K562 (cell line): ENCODE measurements at regions of chr3 and their contacts with region 1.

Region 1: DNA sequence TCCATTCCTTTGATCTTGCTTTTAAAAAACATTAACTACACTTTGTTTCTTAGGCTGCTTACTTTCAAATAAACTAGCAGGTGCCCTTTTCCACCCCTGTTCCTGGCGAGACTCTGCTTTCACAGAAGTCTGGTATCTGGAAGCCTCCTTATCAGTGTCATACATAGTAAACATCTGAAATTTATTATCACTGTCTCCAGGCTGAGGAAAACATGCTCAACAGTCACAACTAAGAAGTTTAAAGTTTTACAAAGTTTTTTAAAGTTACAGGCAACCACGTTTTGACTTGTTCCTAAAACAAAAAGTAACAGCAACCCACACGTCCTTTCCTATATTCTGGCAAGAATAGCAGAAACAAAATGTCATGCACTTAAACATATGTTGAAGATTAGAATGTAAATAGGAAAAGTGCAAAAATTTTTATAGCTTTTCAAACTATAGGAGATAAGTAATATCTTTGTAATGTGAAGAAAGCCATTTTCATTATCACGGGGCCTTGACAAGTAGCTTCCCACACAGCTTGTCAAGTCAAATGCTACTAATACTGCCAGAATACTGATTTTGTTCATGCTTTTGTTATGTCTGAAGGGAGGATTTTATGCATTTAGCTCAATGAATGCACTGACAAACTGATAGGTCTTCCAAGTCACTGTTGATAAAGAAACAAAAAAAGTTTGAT is 275.2 kb upstream of the KCNMB2 start:
- DNase-seq: peak; percentile 24 to 83 (median 50)
- ATAC-seq: peak; percentile 88
- H3K4me3 ChIP-seq: no peak overlapping the region
- H3K27ac ChIP-seq: peak overlapping the region; percentile 70
- H3K4me1 ChIP-seq: peaks cover 0 to 34% of the 10 kb centered on the region in 2 experiments; a peak in 3 of 5 replicates
- H3K27me3 ChIP-seq: no peaks in the 10 kb centered on the region
- CTCF ChIP-seq: no peak
- EP300 ChIP-seq: peak; percentile 96
- POLR2A ChIP-seq: no peak
- RAD21 ChIP-seq: peak; percentile 11 to 29; a peak in 3 of 4 replicates

Region 2: DNA sequence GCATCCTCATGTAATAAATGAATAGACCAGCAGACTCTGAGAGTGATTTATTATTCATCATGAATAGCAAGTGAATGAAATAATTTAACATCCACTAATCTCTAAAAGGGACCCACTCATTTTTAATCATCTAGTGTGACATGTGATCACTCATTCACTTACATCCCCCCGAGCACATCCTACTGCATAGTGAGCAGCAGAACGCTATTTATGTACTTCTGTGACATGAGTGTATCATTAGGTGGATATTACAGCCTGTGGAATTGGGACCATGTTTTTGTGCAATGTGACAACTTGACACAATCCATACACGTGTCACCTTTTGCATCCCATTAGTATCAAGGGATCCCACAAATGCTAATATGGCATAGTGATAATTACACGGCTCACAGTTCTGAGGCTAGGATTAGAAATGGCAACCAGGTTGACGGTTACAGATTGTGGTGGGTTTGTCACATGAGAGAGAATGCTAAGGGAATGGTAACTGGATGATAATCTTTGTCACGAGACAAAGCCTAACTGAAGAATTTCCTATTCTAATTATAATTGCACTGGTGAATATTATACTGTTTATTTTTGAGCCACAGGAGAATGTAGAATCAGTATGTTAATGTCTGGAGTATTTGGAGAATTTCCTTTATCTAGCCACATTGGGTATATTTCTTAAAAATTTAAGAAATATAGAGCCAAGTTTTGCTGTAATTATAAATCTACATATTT is 468.6 kb before region 1 on chr3:
- CTCF ChIA-PET with region 1: no interaction called
- POLR2A ChIA-PET with region 1: no interaction called
- in situ Hi-C with region 1: no loop called
- intact Hi-C with region 1: no loop called
- DNase-seq: no peak
- ATAC-seq: no peak
- H3K4me3 ChIP-seq: no peak overlapping the region
- H3K27ac ChIP-seq: no peak overlapping the region
- H3K4me1 ChIP-seq: no peaks in the 10 kb centered on the region
- H3K27me3 ChIP-seq: no peaks in the 10 kb centered on the region
- CTCF ChIP-seq: no peak
- EP300 ChIP-seq: no peak
- POLR2A ChIP-seq: no peak
- RAD21 ChIP-seq: no peak

Region 3: DNA sequence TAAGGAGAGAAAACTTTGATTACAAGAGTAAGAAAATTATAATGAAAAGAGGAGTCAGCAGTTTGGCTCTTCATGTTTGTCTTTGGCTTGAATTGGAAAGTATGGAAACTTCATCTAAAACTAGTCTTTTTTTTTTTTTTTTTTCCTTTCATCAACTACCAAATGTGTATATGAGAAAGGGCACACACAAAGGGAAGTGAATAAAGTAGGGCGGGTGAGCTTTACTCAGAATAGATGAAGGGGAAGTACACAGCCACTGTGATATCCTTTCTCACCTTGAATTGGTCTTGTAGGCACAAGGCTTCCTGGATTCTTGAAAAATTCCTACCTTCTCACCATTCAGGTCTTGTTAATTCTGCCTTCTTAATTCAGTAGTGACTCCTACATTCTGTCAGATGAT is 377.1 kb before region 1 on chr3:
- CTCF ChIA-PET with region 1: no interaction called
- POLR2A ChIA-PET with region 1: no interaction called
- in situ Hi-C with region 1: no loop called
- intact Hi-C with region 1: no loop called
- DNase-seq: no peak
- ATAC-seq: no peak
- H3K4me3 ChIP-seq: no peak overlapping the region
- H3K27ac ChIP-seq: no peak overlapping the region
- H3K4me1 ChIP-seq: no peaks in the 10 kb centered on the region; a peak in 1 of 5 replicates
- H3K27me3 ChIP-seq: no peaks in the 10 kb centered on the region
- CTCF ChIP-seq: no peak
- EP300 ChIP-seq: no peak
- POLR2A ChIP-seq: no peak
- RAD21 ChIP-seq: no peak

Region 4: GRCh38 chr3:178170698-178171535 is 90.1 kb before region 1 on chr3:
- CTCF ChIA-PET with region 1: no interaction called
- POLR2A ChIA-PET with region 1: no interaction called
- in situ Hi-C with region 1: no loop called
- intact Hi-C with region 1: loop called (anchors 2 kb)
- DNase-seq: peak; percentile 40 to 88 (median 62)
- ATAC-seq: peak; percentile 95
- H3K4me3 ChIP-seq: no peak overlapping the region
- H3K27ac ChIP-seq: peak overlapping the region; percentile 73
- H3K4me1 ChIP-seq: peaks cover 0 to 9% of the 10 kb centered on the region in 2 experiments; a peak in 3 of 5 replicates
- H3K27me3 ChIP-seq: no peaks in the 10 kb centered on the region
- CTCF ChIP-seq: no peak
- EP300 ChIP-seq: peak; percentile 99
- POLR2A ChIP-seq: no peak
- RAD21 ChIP-seq: peak; percentile 31 to 39; a peak in 1 of 4 replicates

Region 5: GRCh38 chr3:178182337-178182779 is 78.7 kb before region 1 on chr3:
- CTCF ChIA-PET with region 1: no interaction called
- POLR2A ChIA-PET with region 1: no interaction called
- in situ Hi-C with region 1: no loop called
- intact Hi-C with region 1: no loop called
- DNase-seq: no peak
- ATAC-seq: peak; percentile 37; the same call in 2 of the 3 replicates
- H3K4me3 ChIP-seq: no peak overlapping the region
- H3K27ac ChIP-seq: no peak overlapping the region
- H3K4me1 ChIP-seq: no peaks in the 10 kb centered on the region; a peak in 1 of 5 replicates
- H3K27me3 ChIP-seq: no peaks in the 10 kb centered on the region
- CTCF ChIP-seq: no peak
- EP300 ChIP-seq: no peak
- POLR2A ChIP-seq: no peak
- RAD21 ChIP-seq: no peak

Region 6: DNA sequence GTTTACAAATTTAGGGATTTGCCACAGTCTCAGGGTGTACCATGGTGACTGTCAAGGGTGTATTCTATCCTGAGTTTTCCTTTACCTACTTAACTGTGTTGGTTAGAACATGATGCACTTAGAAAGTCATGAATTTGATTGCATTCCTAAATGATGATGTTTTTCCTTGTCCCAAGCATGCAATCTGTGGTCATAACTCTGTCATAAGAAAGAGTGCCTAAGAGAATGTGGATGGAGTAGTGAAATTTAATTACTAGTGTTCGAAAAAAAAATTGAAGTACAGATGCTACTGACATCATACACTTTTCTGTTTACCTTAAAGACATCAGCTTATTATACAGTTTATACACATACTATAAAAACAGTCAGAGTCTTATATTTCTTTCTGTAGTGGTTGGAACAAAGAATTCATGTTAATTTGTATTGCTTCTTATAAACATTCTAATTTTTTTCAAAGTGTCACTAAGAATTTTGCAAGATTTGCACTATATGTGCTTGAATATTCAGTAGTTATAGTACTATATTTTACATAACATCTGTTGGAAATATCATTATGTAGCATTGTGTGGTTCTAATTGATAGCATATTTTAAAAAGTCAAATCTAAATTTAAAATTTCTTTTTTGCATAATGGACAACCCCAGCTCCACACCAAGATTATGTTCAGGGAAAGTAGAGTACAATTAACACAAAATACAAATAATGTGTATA is 43.9 kb after region 1 on chr3:
- CTCF ChIA-PET with region 1: no interaction called
- POLR2A ChIA-PET with region 1: interaction called, 3 read pairs
- in situ Hi-C with region 1: no loop called
- intact Hi-C with region 1: loop called (anchors 5 kb)
- DNase-seq: no peak
- ATAC-seq: no peak
- H3K4me3 ChIP-seq: no peak overlapping the region
- H3K27ac ChIP-seq: no peak overlapping the region
- H3K4me1 ChIP-seq: peaks cover 0 to 10% of the 10 kb centered on the region in 2 experiments; a peak in 2 of 5 replicates
- H3K27me3 ChIP-seq: no peaks in the 10 kb centered on the region
- CTCF ChIP-seq: no peak
- EP300 ChIP-seq: no peak
- POLR2A ChIP-seq: no peak
- RAD21 ChIP-seq: no peak